BJ (cell line): ENCODE measurements at regions of chr5 and their contacts with region 1.

Region 1: GRCh38 chr5:140145818-140146522 is 20.2 kb downstream of the IGIP start:
- DNase-seq: no peak
- H3K4me3 ChIP-seq: peak overlapping the region; percentile 28
- H3K27me3 ChIP-seq: no peaks in the 10 kb centered on the region
- CTCF ChIP-seq: peak; percentile 39

Region 2: DNA sequence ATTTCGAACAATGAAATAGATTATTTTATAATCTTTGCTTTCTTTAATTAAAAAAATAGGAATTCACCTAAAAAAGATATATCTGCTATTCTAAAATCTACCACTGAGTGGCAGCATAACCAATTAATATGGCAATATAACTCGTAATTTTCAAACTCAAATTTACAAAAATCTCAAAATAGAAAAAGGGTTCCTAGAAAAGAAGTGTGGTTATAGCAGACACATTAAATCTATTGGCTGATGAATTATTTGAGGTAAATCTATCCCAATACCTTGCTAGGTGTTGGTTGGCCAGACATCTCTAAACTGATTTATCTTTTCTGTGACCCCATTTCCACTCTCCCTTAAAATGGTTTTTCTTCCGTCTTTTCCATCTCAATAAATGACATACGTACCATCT is 72.7 kb before region 1 on chr5:
- CTCF ChIA-PET with region 1: interaction called, 106 read pairs
- POLR2A ChIA-PET with region 1: no interaction called
- DNase-seq: no peak
- H3K4me3 ChIP-seq: no peak overlapping the region
- H3K27me3 ChIP-seq: peaks cover 3% of the 10 kb centered on the region
- CTCF ChIP-seq: 0 out of 2 replicates have a peak, but pooled peaks have one; percentile 32

Region 3: GRCh38 chr5:140107312-140108083 is 38.5 kb before region 1 on chr5:
- CTCF ChIA-PET with region 1: interaction called, 118 read pairs
- POLR2A ChIA-PET with region 1: no interaction called
- DNase-seq: peak; percentile 51
- H3K4me3 ChIP-seq: peak overlapping the region; percentile 94
- H3K27me3 ChIP-seq: 0 out of 2 replicates have a peak, but pooled peaks cover 2% of the 10 kb centered on the region
- CTCF ChIP-seq: peak; percentile 37; the same call in 1 of the 2 replicates

Region 4: GRCh38 chr5:140113699-140114263 is 32.2 kb before region 1 on chr5 and contains the start of gene PURA:
- CTCF ChIA-PET with region 1: interaction called, 118 read pairs
- POLR2A ChIA-PET with region 1: no interaction called
- DNase-seq: peak; percentile 48
- H3K4me3 ChIP-seq: peak within 1 kb of the TSS; percentile 88
- H3K27me3 ChIP-seq: no peaks in the 10 kb centered on the region
- CTCF ChIP-seq: no peak
- polyA plus RNA-seq, gene PURA: 5.2 and 6.7 TPM in 2 replicates

Region 5: GRCh38 chr5:140131967-140132409 is 14.0 kb before region 1 on chr5:
- CTCF ChIA-PET with region 1: interaction called, 53 read pairs
- POLR2A ChIA-PET with region 1: no interaction called
- DNase-seq: peak; percentile 81
- H3K4me3 ChIP-seq: no peak overlapping the region
- H3K27me3 ChIP-seq: no peaks in the 10 kb centered on the region
- CTCF ChIP-seq: no peak

Region 6: GRCh38 chr5:140157032-140157803 is 11.2 kb after region 1 on chr5:
- CTCF ChIA-PET with region 1: interaction called, 46 read pairs
- POLR2A ChIA-PET with region 1: no interaction called
- DNase-seq: no peak
- H3K4me3 ChIP-seq: peak overlapping the region; percentile 35
- H3K27me3 ChIP-seq: no peaks in the 10 kb centered on the region
- CTCF ChIP-seq: peak; percentile 92